HEK293T (cell line): ENCODE measurements at regions of chr10 and their contacts with region 1.

Region 1: GRCh38 chr10:116287906-116288501 is 15.0 kb upstream of the GFRA1 start:
- DNase-seq: peak; percentile 39

Region 2: DNA sequence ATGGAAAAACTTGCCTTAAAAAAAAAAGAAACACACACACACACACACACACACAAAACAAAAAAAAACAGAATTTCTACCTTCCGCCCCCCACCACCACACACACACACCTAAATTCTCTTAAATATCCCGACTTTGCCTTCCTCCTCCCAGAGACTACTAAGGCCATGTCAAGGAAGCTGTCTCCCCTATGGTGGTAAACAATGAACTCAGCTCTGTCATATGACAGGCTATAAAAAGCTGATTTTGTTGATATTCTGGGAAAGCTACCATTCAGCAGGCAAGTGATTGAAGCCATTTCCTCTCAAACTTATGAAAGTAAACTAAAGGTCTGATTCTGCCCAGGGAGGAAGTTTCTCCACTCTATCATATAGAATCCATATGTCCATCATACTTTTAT is 486.0 kb before region 1 on chr10:
- CTCF ChIA-PET with region 1: interaction called, 10 read pairs
- POLR2A ChIA-PET with region 1: no interaction called
- DNase-seq: no peak

Region 3: GRCh38 chr10:116324951-116325635 is 37.1 kb after region 1 on chr10:
- CTCF ChIA-PET with region 1: no interaction called
- POLR2A ChIA-PET with region 1: no interaction called
- DNase-seq: no peak